Heart left ventricle (tissue), 16 donors: ENCODE measurements at regions of chr15 and their contacts with region 1.

Region 1: DNA sequence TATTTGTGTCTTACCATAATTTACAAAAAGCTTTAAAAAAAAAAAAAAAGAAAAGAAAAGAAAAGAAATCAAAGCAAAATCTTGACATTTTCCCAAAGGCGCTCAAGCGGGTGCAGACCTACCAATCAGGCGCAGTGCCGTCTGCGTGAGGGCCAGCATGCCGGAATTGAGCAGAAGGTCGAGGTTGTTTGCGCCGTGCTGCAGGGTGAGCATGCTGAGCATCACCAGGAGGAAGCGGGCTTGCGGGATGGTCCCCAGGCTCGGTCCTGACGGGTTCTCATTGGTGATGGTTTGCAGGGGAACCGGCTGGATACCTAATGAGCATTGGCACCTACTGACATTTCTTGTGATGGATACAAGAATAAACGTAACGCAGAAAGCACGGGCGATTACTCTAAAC is 93.9 kb downstream of the HERC2 start:
- DNase-seq: no peak
- ATAC-seq: no peak
- H3K4me3 ChIP-seq: no peak overlapping the region
- H3K27ac ChIP-seq: no peak overlapping the region
- H3K4me1 ChIP-seq: peaks cover 0 to 5% (median 0%) of the 10 kb centered on the region in 12 donors
- H3K27me3 ChIP-seq: no peaks in the 10 kb centered on the region
- CTCF ChIP-seq: no peak
- POLR2A ChIP-seq: no peak

Region 2: DNA sequence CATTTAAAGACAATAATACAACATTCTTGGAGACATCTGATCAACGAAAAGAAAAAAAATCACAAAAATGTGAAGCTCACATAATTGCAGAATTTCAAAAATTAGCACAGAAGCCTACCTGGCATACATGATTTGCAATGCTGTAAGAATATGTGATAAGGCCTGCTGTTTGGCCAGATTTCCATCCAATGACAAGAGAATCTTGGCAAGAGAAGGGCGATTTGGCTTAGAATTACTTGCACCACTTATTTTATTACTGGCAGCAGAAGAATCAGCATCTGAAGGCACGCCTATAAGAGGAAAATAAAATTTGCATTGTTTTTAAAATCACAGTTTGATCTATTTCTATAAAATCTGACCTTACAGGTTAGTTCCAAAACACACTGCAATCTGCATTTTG is 58.7 kb before region 1 on chr15:
- intact Hi-C with region 1: loop called in 1 of 10 experiments (anchors 10 kb)
- DNase-seq: no peak
- ATAC-seq: no peak
- H3K4me3 ChIP-seq: no peak overlapping the region
- H3K27ac ChIP-seq: no peak overlapping the region
- H3K4me1 ChIP-seq: peaks cover 0 to 14% (median 7%) of the 10 kb centered on the region in 12 donors
- H3K27me3 ChIP-seq: no peaks in the 10 kb centered on the region
- CTCF ChIP-seq: no peak
- POLR2A ChIP-seq: no peak

Region 3: GRCh38 chr15:28184166-28184565 is 43.9 kb before region 1 on chr15:
- intact Hi-C with region 1: no loop called
- DNase-seq: no peak
- ATAC-seq: no peak
- H3K4me3 ChIP-seq: no peak overlapping the region
- H3K27ac ChIP-seq: no peak overlapping the region
- H3K4me1 ChIP-seq: peaks cover 0 to 15% (median 2%) of the 10 kb centered on the region in 12 donors
- H3K27me3 ChIP-seq: no peaks in the 10 kb centered on the region
- CTCF ChIP-seq: no peak
- POLR2A ChIP-seq: no peak